ENCODE measurements at regions of chr1 and their contacts with region 1.

Region 1: DNA sequence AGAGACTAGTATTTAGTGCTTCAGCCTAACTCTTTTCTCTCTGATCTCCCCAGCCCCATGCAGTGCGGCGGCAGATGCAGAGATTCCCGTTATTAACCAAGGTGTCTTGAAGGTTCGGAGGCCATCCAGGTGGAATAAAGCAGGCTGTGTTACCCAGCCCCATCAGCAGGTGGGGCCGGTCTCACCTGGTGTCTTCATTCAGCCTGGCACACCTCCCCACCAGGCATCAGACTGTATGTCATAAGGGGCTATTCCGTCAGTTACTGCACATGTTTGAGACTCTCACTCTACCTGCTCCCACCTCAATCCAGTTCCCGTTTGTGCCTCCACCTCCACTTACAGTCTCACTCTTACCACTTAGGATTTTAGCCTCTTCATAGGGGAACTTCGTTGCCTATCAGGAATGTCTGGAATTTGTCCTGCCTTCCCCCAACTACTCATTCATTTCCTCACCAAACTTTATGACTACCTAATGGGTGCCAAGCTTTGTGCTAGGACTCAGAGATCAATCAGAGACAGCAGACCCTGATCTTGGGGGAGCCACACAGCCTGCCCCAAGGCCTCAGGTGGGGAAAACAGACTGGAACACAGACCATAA is 170.2 kb downstream of the PLPP3 start:
- DNase-seq: no peak
- ATAC-seq: peak; percentile 79
- H3K4me3 ChIP-seq: no peak overlapping the region
- H3K27ac ChIP-seq: no peak overlapping the region
- H3K4me1 ChIP-seq: no peaks in the 10 kb centered on the region
- H3K27me3 ChIP-seq: no peaks in the 10 kb centered on the region
- CTCF ChIP-seq: peak; percentile 49 to 53 (median 52); a peak in 5 of 6 replicates
- EP300 ChIP-seq: no peak
- POLR2A ChIP-seq: no peak
- RAD21 ChIP-seq: peak; percentile 44

Region 2: GRCh38 chr1:55702064-55702463 is 707.1 kb before region 1 on chr1:
- CTCF ChIA-PET with region 1: no interaction called
- POLR2A ChIA-PET with region 1: no interaction called
- RAD21 ChIA-PET with region 1: no interaction called
- SMC1A ChIA-PET with region 1: no interaction called
- in situ Hi-C with region 1: no loop called
- intact Hi-C with region 1: loop called (anchors 5 kb)
- DNase-seq: no peak
- ATAC-seq: peak; percentile 85
- H3K4me3 ChIP-seq: no peak overlapping the region
- H3K27ac ChIP-seq: no peak overlapping the region
- H3K4me1 ChIP-seq: no peaks in the 10 kb centered on the region
- H3K27me3 ChIP-seq: no peaks in the 10 kb centered on the region
- CTCF ChIP-seq: peak; percentile 64 to 90 (median 83)
- EP300 ChIP-seq: no peak
- POLR2A ChIP-seq: no peak
- RAD21 ChIP-seq: peak; percentile 57

Region 3: DNA sequence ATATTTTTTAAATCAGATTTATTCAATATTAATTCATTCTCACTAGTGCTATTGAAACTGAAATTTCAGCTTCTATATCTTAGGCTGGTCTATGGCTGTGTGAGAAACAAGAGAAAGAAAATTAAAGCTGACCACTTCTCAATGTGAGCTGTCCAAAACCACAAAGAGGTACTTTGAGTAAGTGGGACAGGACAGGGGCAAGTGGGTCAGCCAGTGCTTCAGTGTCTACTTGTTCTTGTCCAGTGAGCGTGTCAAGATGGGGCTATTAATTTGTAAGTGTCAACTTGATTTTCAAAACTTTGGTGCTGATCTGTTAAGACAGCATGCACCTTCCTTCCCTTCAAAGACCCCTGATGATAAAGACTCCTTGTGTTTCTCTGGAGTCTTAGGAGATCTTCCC is 363.7 kb before region 1 on chr1:
- CTCF ChIA-PET with region 1: no interaction called
- POLR2A ChIA-PET with region 1: no interaction called
- RAD21 ChIA-PET with region 1: no interaction called
- SMC1A ChIA-PET with region 1: no interaction called
- in situ Hi-C with region 1: no loop called
- intact Hi-C with region 1: no loop called
- DNase-seq: no peak
- ATAC-seq: peak; percentile 93
- H3K4me3 ChIP-seq: no peak overlapping the region
- H3K27ac ChIP-seq: no peak overlapping the region
- H3K4me1 ChIP-seq: peaks cover 8% of the 10 kb centered on the region
- H3K27me3 ChIP-seq: no peaks in the 10 kb centered on the region
- CTCF ChIP-seq: no peak
- EP300 ChIP-seq: no peak
- POLR2A ChIP-seq: no peak
- RAD21 ChIP-seq: no peak

Region 4: DNA sequence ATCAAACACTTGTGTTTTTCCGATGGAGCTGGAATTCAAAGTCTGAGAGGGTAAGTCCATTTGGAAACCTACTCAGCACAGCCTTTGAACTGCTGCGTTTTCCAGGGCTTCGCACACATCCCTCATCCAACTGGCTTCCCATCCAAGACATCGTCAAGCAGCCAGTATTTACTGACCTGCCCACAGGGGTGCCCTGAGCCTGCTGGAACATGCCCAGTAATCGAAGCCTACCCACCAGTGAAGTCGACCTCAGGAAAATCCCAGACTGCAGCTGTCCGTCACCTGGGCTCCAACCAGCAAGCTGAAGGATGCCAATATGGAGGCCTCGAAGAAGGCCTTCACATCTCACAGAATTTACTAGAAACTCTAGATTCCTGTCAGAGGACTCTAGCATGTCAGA is 91.5 kb before region 1 on chr1:
- CTCF ChIA-PET with region 1: no interaction called
- POLR2A ChIA-PET with region 1: no interaction called
- RAD21 ChIA-PET with region 1: no interaction called
- SMC1A ChIA-PET with region 1: no interaction called
- in situ Hi-C with region 1: no loop called
- intact Hi-C with region 1: no loop called
- DNase-seq: no peak
- ATAC-seq: no peak
- H3K4me3 ChIP-seq: no peak overlapping the region
- H3K27ac ChIP-seq: no peak overlapping the region
- H3K4me1 ChIP-seq: no peaks in the 10 kb centered on the region
- H3K27me3 ChIP-seq: peaks cover 0 to 2% of the 10 kb centered on the region in 2 experiments; a peak in 1 of 4 replicates
- CTCF ChIP-seq: no peak
- EP300 ChIP-seq: no peak
- POLR2A ChIP-seq: no peak
- RAD21 ChIP-seq: no peak

Region 5: GRCh38 chr1:56396581-56396980 is 12.6 kb before region 1 on chr1:
- CTCF ChIA-PET with region 1: interaction called, 17 read pairs
- POLR2A ChIA-PET with region 1: interaction called, 3 read pairs
- RAD21 ChIA-PET with region 1: no interaction called
- SMC1A ChIA-PET with region 1: interaction called, 8 read pairs
- in situ Hi-C with region 1: no loop called
- intact Hi-C with region 1: no loop called
- DNase-seq: no peak
- ATAC-seq: no peak
- H3K4me3 ChIP-seq: no peak overlapping the region
- H3K27ac ChIP-seq: no peak overlapping the region
- H3K4me1 ChIP-seq: no peaks in the 10 kb centered on the region
- H3K27me3 ChIP-seq: no peaks in the 10 kb centered on the region
- CTCF ChIP-seq: no peak
- EP300 ChIP-seq: no peak
- POLR2A ChIP-seq: no peak
- RAD21 ChIP-seq: no peak

Region 6: GRCh38 chr1:56424744-56425508 is 15.7 kb after region 1 on chr1:
- CTCF ChIA-PET with region 1: interaction called, 22 read pairs
- POLR2A ChIA-PET with region 1: no interaction called
- RAD21 ChIA-PET with region 1: interaction called, 4 read pairs
- SMC1A ChIA-PET with region 1: interaction called, 19 read pairs
- in situ Hi-C with region 1: no loop called
- intact Hi-C with region 1: no loop called
- DNase-seq: no peak
- ATAC-seq: peak; percentile 68
- H3K4me3 ChIP-seq: no peak overlapping the region
- H3K27ac ChIP-seq: no peak overlapping the region
- H3K4me1 ChIP-seq: no peaks in the 10 kb centered on the region
- H3K27me3 ChIP-seq: no peaks in the 10 kb centered on the region; a peak in 2 of 4 replicates
- CTCF ChIP-seq: no peak
- EP300 ChIP-seq: no peak
- POLR2A ChIP-seq: no peak
- RAD21 ChIP-seq: no peak

Region 7: GRCh38 chr1:56562891-56563452 is 153.8 kb after region 1 on chr1:
- CTCF ChIA-PET with region 1: interaction called, 16 read pairs
- POLR2A ChIA-PET with region 1: no interaction called
- RAD21 ChIA-PET with region 1: interaction called, 7 read pairs
- SMC1A ChIA-PET with region 1: interaction called, 6 read pairs
- in situ Hi-C with region 1: no loop called
- intact Hi-C with region 1: no loop called
- DNase-seq: no peak
- ATAC-seq: no peak
- H3K4me3 ChIP-seq: no peak overlapping the region
- H3K27ac ChIP-seq: no peak overlapping the region
- H3K4me1 ChIP-seq: no peaks in the 10 kb centered on the region; the same call in 1 of the 2 replicates
- H3K27me3 ChIP-seq: no peaks in the 10 kb centered on the region
- CTCF ChIP-seq: no peak
- EP300 ChIP-seq: no peak
- POLR2A ChIP-seq: no peak
- RAD21 ChIP-seq: no peak

Region 8: GRCh38 chr1:56570924-56571372 is 161.8 kb after region 1 on chr1:
- CTCF ChIA-PET with region 1: interaction called, 257 read pairs
- POLR2A ChIA-PET with region 1: interaction called, 3 read pairs
- RAD21 ChIA-PET with region 1: interaction called, 146 read pairs
- SMC1A ChIA-PET with region 1: interaction called, 154 read pairs
- in situ Hi-C with region 1: no loop called
- intact Hi-C with region 1: loop called (anchors 1 kb)
- DNase-seq: no peak
- ATAC-seq: peak; percentile 33
- H3K4me3 ChIP-seq: no peak overlapping the region
- H3K27ac ChIP-seq: no peak overlapping the region
- H3K4me1 ChIP-seq: no peaks in the 10 kb centered on the region
- H3K27me3 ChIP-seq: peaks cover 0 to 3% of the 10 kb centered on the region in 2 experiments; a peak in 1 of 4 replicates
- CTCF ChIP-seq: no peak
- EP300 ChIP-seq: no peak
- POLR2A ChIP-seq: no peak
- RAD21 ChIP-seq: no peak

Measured in GM12878 (cell line).